Activated T-helper 1 cell treated with anti-CD3 and anti-CD28 coated beads, Interleukin-12 subunit alpha, Interleukin-12 subunit beta, Interleukin-2, Interleukin-4 antibody, amounts not matched to agents 30 ng/mL and 10 ng/mL and 1 ng/mL, durations not matched to agents 14 hours and 24 hours and 36 hours (primary cell): ENCODE measurements at regions of chr4 and their contacts with region 1.

Region 1: DNA sequence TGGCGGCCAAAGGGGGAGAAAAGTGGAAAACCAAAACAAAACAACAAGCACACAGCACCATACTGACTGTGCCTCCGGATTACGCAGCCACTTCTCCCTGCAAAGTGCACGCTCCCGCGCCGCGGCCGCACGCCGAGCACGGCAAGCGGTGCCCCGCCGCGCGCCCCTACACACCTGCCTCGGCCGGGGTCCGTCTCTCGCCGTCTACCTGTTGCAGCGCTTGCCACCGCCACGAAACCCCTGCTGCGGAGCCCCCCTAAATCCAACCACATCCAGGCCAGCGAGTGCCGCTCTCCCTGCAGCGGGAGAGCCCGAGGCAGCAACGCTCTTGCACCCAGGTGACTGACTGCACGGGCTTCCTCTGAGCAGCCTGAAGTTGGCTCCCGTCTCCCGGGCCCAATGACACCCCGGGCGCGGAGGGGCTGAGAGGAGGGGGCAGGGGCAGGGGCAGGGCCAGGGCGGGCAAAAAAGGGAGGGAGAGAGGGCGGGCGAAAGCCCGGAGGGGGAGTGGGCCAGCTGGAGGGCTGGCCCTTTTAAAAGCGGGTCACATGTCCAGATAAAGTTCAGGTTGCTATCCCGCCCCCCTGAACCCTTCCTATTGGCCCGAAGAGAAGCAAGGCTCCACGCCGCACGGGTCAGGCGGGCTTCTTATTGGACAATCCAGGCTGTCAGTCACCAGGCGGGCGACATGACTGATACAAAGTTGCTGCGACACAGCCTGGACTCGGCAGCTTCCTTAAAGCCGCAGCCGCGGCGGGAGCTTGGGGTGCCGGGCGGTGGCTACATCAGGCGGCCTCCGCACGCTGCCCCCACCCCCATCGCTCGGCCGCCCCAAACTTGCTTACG is at the start of gene NR3C2:
- DNase-seq: peak; percentile 94
- H3K4me3 Mint-ChIP-seq: peak within 1 kb of the TSS; percentile 96
- H3K27ac Mint-ChIP-seq: peak within 1 kb of the TSS; percentile 48
- H3K4me1 Mint-ChIP-seq: peaks cover 23% of the 10 kb centered on the region
- H3K27me3 Mint-ChIP-seq: peaks cover 41% of the 10 kb centered on the region
- total RNA-seq, gene NR3C2: 0.24 and 0.29 TPM in 2 replicates

Region 2: GRCh38 chr4:147683717-147684700 is 758.2 kb before region 1 on chr4 and contains the start of gene PRMT9:
- intact Hi-C with region 1: loop called (anchors 5 kb)
- DNase-seq: peak; percentile 85
- H3K4me3 Mint-ChIP-seq: peak within 1 kb of the TSS; percentile 92
- H3K27ac Mint-ChIP-seq: peak within 1 kb of the TSS; percentile 92
- H3K4me1 Mint-ChIP-seq: peaks cover 30% of the 10 kb centered on the region
- H3K27me3 Mint-ChIP-seq: peaks cover 9% of the 10 kb centered on the region
- total RNA-seq, gene PRMT9: 6.8 and 7.4 TPM in 2 replicates

Region 3: GRCh38 chr4:147843162-147843561 is 599.0 kb before region 1 on chr4:
- intact Hi-C with region 1: loop called (anchors 10 kb)
- DNase-seq: no peak
- H3K4me3 Mint-ChIP-seq: no peak overlapping the region
- H3K27ac Mint-ChIP-seq: no peak overlapping the region
- H3K4me1 Mint-ChIP-seq: no peaks in the 10 kb centered on the region
- H3K27me3 Mint-ChIP-seq: peaks cover 21% of the 10 kb centered on the region

Region 4: GRCh38 chr4:147984065-147984777 is 458.0 kb before region 1 on chr4:
- intact Hi-C with region 1: loop called (anchors 5 kb)
- DNase-seq: peak; percentile 8
- H3K4me3 Mint-ChIP-seq: no peak overlapping the region
- H3K27ac Mint-ChIP-seq: no peak overlapping the region
- H3K4me1 Mint-ChIP-seq: peaks cover 16% of the 10 kb centered on the region
- H3K27me3 Mint-ChIP-seq: peaks cover 5% of the 10 kb centered on the region

Region 5: DNA sequence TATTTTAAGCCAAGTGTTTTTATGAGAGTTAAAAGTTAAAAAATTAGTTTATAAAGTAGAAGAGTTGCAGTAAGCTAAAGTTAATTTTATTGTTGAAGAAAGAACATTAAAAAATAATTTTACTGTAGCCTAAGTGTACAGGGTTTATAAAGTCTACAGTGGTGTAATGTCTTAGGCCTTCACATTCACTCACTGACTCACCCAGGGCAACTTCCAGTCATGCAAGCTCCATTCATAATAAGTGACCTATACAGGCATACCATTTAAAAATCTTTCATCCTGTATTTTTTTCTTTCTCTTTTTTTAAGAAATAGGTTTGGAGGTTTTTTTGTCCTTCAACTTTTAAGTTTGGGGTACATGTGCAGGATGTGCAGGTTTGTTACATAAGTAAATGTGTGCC is 87.9 kb after region 1 on chr4:
- intact Hi-C with region 1: no loop called
- DNase-seq: no peak
- H3K4me3 Mint-ChIP-seq: no peak overlapping the region
- H3K27ac Mint-ChIP-seq: no peak overlapping the region
- H3K4me1 Mint-ChIP-seq: no peaks in the 10 kb centered on the region
- H3K27me3 Mint-ChIP-seq: no peaks in the 10 kb centered on the region

Region 6: DNA sequence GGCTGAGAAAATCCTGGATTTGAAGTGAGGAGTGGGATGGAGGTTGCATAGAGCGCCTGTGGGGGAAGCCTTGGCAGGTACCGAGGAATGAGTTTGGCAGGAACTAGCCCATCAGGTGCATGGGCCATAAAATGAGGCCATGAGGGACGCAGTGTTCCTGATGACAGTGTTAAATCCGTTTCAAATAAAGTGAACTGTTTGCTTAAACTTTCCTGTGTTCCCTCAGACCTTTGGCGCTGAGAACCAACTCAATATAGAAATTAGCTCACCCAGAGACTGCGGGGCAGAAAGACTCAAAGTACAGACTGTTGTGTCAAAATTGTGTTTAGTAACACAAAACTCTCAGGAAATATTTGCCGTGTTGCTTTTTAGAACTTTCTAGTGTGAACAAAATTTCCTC is 250.0 kb after region 1 on chr4:
- intact Hi-C with region 1: no loop called
- DNase-seq: no peak
- H3K4me3 Mint-ChIP-seq: no peak overlapping the region
- H3K27ac Mint-ChIP-seq: no peak overlapping the region
- H3K4me1 Mint-ChIP-seq: no peaks in the 10 kb centered on the region
- H3K27me3 Mint-ChIP-seq: no peaks in the 10 kb centered on the region